BJ (cell line): ENCODE measurements at regions of chr9 and their contacts with region 1.

Region 1: GRCh38 chr9:121369595-121370265 is at the start of gene STOM:
- DNase-seq: peak; percentile 46
- H3K4me3 ChIP-seq: peak within 1 kb of the TSS; percentile 92
- H3K27me3 ChIP-seq: no peaks in the 10 kb centered on the region
- CTCF ChIP-seq: no peak
- polyA plus RNA-seq, gene STOM: 223 and 275 TPM in 2 replicates

Region 2: GRCh38 chr9:121261107-121261460 is 108.6 kb before region 1 on chr9:
- CTCF ChIA-PET with region 1: no interaction called
- POLR2A ChIA-PET with region 1: interaction called, 12 read pairs
- DNase-seq: no peak
- H3K4me3 ChIP-seq: no peak overlapping the region
- H3K27me3 ChIP-seq: no peaks in the 10 kb centered on the region
- CTCF ChIP-seq: no peak

Region 3: DNA sequence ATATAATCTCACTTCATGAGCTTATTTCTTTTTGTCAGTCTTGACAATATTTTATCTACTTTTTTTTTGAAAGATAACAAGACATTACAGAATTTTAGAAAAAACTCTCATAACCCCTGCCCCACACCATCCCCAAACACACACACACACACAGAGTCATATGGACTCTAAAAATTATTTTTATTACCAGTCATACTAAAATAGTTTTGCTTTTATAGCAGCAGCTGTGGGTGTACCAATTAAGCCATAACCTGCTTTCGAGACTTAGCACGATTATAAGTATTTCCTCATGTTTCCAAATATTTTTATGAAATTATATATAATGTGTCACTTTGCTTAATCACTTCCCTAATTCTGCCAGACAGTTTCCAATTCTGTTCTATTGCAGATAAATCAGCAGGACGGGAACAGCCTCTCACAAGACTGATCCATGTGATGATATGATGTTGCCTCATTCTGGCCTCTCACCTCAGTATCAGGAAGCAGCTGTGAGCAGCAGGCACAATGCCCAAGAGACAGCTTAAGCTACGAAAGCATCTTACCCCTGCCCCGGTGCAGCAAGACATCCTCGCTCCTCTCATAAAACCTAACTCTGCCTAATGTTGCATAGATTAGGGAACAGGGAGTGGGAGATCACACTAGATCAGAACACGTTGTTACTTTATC is 1451.7 kb after region 1 on chr9:
- CTCF ChIA-PET with region 1: no interaction called
- POLR2A ChIA-PET with region 1: no interaction called
- DNase-seq: no peak
- H3K4me3 ChIP-seq: no peak overlapping the region
- H3K27me3 ChIP-seq: no peaks in the 10 kb centered on the region
- CTCF ChIP-seq: no peak